ENCODE measurements at regions of chr10 and their contacts with region 1.

Region 1: DNA sequence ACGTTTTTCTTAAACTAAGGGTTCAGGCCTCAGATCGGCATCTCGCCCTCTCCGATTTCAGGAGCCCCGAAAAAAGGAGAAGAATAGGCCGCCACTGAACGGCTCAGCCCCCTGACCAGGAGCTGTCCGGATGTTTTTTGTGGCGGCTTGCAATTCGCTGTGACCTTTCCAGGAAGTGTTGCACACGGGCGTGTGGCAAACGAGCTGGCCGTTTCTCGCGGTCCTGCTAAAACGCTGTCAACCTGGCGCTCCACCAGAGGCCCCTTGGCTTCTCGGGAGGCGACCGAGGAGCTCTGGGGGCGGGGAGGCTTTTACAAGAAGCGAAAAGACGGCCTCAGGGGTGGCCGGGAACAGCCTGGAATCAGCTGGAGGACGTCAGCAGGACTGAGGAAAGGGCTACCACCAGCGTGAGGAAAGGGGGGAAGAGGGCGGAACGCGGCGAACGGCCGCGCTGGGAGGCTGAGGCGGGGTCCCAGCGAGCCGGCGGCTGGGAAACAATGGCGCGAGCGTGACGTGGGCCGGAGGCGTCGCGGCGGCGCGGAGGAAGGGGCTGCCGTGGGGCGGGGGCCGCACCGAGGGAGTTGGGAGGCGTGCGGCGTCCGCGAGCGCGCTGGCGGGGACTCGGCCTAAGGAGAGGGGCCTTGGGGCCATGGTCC is 493 bp downstream of the NT5C2 start:
- DNase-seq: peak; percentile 19 to 74 (median 51)
- ATAC-seq: peak; percentile 64
- H3K4me3 ChIP-seq: peak overlapping the region; percentile 68 to 85
- H3K4me3 Mint-ChIP-seq: peak overlapping the region; percentile 97
- H3K27ac ChIP-seq: peak overlapping the region; percentile 76 to 88
- H3K27ac Mint-ChIP-seq: peak overlapping the region; percentile 96
- H3K4me1 ChIP-seq: peaks cover 25% of the 10 kb centered on the region
- H3K4me1 Mint-ChIP-seq: peaks cover 41% of the 10 kb centered on the region
- H3K27me3 ChIP-seq: no peaks in the 10 kb centered on the region
- H3K27me3 Mint-ChIP-seq: no peaks in the 10 kb centered on the region
- CTCF ChIP-seq: no peak

Region 2: DNA sequence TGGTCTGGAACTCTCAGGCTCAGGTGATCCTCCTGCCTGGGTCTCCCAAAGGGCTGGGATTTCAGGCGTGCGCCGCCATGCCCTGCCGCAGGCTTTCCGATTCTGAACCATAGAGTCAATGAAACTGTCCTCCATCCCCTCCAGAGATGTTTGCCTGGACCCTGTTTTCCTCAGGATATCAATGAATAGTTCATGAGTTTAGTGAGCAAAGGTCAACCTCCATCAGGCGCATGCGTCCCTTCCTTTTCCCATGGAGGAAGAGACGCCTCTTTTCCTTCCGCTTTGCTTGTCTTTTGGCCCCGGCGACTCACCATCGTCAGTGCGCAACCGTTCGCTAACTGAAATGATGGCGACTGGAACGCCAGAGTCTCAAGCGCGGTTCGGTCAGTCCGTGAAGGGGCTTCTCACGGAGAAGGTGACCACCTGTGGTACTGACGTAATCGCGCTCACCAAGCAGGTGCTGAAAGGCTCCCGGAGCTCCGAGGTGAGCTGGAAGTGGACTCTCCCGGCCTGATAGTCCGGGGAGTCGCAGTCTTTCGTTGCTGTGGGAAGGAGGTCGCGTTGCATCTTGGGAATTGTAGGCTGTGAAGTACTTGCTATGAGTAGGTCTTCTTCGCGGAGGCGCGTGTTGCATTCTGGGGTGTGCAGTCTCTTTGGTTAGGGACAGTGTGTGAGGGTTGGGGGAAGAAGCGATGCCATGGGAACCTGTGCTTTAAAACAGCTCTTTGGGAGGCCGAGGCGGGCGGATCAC is 338.5 kb before region 1 on chr10 and contains the start of gene BORCS7:
- CTCF ChIA-PET with region 1: interaction called, 3 read pairs
- POLR2A ChIA-PET with region 1: no interaction called
- intact Hi-C with region 1: loop called in 1 of 2 experiments (anchors 2 kb)
- DNase-seq: peak; percentile 68 to 95 (median 87)
- ATAC-seq: peak; percentile 99
- H3K4me3 ChIP-seq: peak within 1 kb of the TSS; percentile 99
- H3K4me3 Mint-ChIP-seq: peak within 1 kb of the TSS; percentile 99
- H3K27ac ChIP-seq: peak within 1 kb of the TSS; percentile 90 to 98
- H3K27ac Mint-ChIP-seq: peak within 1 kb of the TSS; percentile 99
- H3K4me1 ChIP-seq: peaks cover 5% of the 10 kb centered on the region
- H3K4me1 Mint-ChIP-seq: peaks cover 17% of the 10 kb centered on the region
- H3K27me3 ChIP-seq: no peaks in the 10 kb centered on the region
- H3K27me3 Mint-ChIP-seq: no peaks in the 10 kb centered on the region
- CTCF ChIP-seq: no peak
- total RNA-seq, gene BORCS7: 13.7 to 13.9 TPM

Region 3: GRCh38 chr10:104067525-104067924 is 874.9 kb after region 1 on chr10:
- CTCF ChIA-PET with region 1: no interaction called
- POLR2A ChIA-PET with region 1: no interaction called
- intact Hi-C with region 1: no loop called
- DNase-seq: no peak
- ATAC-seq: no peak
- H3K4me3 ChIP-seq: no peak overlapping the region
- H3K4me3 Mint-ChIP-seq: no peak overlapping the region
- H3K27ac ChIP-seq: no peak overlapping the region
- H3K27ac Mint-ChIP-seq: no peak overlapping the region
- H3K4me1 ChIP-seq: no peaks in the 10 kb centered on the region
- H3K4me1 Mint-ChIP-seq: no peaks in the 10 kb centered on the region
- H3K27me3 ChIP-seq: no peaks in the 10 kb centered on the region
- H3K27me3 Mint-ChIP-seq: peaks cover 9% of the 10 kb centered on the region
- CTCF ChIP-seq: no peak